ENCODE measurements at regions of chr14 and their contacts with region 1.

Region 1: GRCh38 chr14:69611201-69612011 is at the start of gene SUSD6:
- DNase-seq: peak; percentile 91 to 93
- ATAC-seq: peak; percentile 84 to 94 (median 89)
- H3K4me3 ChIP-seq: peak within 1 kb of the TSS; percentile 73 to 91 (median 84)
- H3K27ac ChIP-seq: peak within 1 kb of the TSS; percentile 93 to 99 (median 98)
- H3K4me1 ChIP-seq: peaks cover 17 to 68% (median 53%) of the 10 kb centered on the region in 9 donors
- H3K27me3 ChIP-seq: no peaks in the 10 kb centered on the region
- CTCF ChIP-seq: no peak
- total RNA-seq, gene SUSD6: 18.0 to 46.3 (median 25.5) TPM

Region 2: GRCh38 chr14:69667938-69668335 is 56.5 kb after region 1 on chr14:
- intact Hi-C with region 1: loop called in 6 of 10 experiments (anchors 5 to 10 kb)
- DNase-seq: no peak
- ATAC-seq: no peak
- H3K4me3 ChIP-seq: no peak overlapping the region
- H3K27ac ChIP-seq: peak overlapping the region in 3 of 10 donors; percentile 16 to 76 (median 75)
- H3K4me1 ChIP-seq: peaks cover 34 to 100% (median 88%) of the 10 kb centered on the region in 9 donors
- H3K27me3 ChIP-seq: no peaks in the 10 kb centered on the region
- CTCF ChIP-seq: no peak

Region 3: DNA sequence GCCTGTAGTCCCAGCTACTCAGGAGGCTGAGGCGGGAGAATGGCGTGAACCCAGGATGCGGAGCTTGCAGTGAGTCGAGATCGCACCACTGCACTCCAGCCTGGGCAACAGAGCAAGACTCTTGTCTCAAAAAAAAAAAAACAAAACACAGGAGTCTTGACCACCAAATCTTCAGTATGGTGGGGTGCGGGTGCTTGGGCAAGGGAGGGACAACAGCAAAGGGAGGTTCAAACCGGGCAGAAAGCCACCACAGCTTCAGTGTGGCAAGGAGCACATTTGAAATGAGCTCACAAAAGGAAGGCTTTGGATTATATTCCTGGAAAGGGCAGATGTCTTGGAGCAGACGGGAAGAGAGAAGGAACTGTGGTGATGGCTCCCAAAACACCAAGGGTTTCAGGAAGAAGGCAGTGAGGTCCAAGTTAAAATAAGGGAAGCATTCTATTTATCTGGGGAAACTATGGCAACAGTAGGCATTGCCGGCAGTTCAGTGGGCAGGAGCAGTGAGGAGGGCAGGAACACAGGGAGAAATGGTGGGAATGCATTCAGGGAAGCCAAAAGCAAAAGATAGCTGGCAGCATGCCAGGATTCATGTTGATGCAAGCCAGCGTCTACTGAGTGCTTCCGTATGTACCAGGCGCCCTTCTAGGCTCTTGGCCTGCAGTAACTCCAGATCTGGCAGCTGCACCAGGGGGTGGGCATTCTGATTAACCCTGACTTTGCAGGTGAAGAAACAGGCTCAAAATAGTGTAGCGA is 104.5 kb after region 1 on chr14:
- intact Hi-C with region 1: loop called in 6 of 10 experiments (anchors 2 to 5 kb)
- DNase-seq: peak; percentile 44 to 79
- ATAC-seq: peak; percentile 17 to 73 (median 55)
- H3K4me3 ChIP-seq: no peak overlapping the region
- H3K27ac ChIP-seq: peak overlapping the region in 8 of 10 donors; percentile 15 to 88 (median 36)
- H3K4me1 ChIP-seq: peaks cover 34 to 98% (median 79%) of the 10 kb centered on the region in 9 donors
- H3K27me3 ChIP-seq: no peaks in the 10 kb centered on the region
- CTCF ChIP-seq: no peak

Region 4: DNA sequence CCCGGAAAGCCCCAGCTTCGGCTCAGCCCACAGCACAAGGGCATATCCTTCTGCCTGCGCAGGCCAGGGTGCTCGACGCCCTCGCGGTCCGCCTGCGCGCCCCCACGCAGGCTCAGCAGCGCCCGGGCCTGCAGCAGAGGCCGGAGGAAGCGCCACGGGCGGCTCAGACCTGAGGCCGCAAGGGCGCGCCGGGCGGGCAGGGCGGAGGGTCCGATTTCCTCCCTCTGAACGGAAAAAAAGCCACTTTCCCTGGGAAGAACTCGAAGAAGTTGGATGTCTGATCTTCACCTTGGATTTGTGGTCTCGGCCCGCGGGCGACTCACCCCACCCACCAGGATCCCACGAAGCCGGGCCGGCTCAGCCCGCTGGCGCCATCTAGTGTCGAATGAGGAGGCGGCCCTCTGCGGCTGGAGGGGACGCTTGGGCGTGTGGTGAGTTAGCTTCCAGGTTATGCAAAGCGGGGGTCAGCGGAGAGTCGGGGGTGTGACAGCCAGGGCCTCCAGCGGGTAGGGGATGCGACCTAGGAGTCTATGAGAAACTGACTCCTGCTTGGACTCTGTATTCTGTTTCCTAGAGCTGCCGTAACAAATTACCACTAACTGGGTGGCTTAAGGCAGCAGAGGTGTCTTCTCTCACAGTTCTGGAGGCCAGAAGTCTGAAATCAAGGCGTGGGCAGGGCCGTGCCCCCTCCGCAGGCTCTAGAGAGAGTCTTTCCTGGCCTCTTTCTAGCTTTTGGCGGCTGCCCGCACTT is 115.5 kb after region 1 on chr14:
- intact Hi-C with region 1: loop called in 2 of 10 experiments (anchors 5 kb)
- DNase-seq: peak; percentile 83 to 88
- ATAC-seq: peak; percentile 94 to 97 (median 96)
- H3K4me3 ChIP-seq: peak overlapping the region in 9 of 10 donors; percentile 33 to 54 (median 45)
- H3K27ac ChIP-seq: peak overlapping the region; percentile 31 to 89 (median 72)
- H3K4me1 ChIP-seq: peaks cover 0 to 41% (median 16%) of the 10 kb centered on the region in 9 donors
- H3K27me3 ChIP-seq: no peaks in the 10 kb centered on the region
- CTCF ChIP-seq: peak; percentile 93 to 100 (median 98)

Measured in heart right ventricle (tissue), 16 donors.